ENCODE measurements at regions of chr15 and their contacts with region 1.

Region 1: DNA sequence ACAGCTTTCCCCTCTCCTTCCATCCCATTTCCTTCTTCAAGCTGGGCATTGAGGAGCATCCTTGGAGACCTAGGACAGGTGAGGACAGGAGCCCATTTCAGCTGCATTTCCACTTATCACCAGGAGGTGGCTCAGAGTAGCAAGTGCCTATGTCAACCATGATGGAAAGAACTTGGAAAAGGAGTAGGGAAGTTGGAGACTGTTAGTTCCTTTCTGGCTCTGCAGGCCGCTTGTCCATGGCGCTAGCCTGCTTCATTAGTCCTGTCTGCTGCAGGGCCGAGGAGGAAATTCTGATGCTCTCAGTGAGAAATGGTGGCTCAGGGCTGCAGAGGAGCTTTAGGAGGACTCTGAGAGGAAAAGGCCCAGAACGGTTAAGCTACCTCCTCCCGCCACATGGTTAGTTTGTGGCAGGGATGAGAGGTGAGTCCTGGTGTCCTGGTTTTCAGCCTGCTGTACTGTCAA is 7.0 kb upstream of the CD276 start:
- DNase-seq: peak; percentile 40 to 45 (median 42)
- H3K4me3 ChIP-seq: no peak overlapping the region
- H3K27ac ChIP-seq: no peak overlapping the region
- H3K4me1 ChIP-seq: peaks cover 0 to 29% (median 8%) of the 10 kb centered on the region in 4 experiments
- H3K27me3 ChIP-seq: peaks cover 0 to 6% (median 0%) of the 10 kb centered on the region in 5 experiments

Region 2: DNA sequence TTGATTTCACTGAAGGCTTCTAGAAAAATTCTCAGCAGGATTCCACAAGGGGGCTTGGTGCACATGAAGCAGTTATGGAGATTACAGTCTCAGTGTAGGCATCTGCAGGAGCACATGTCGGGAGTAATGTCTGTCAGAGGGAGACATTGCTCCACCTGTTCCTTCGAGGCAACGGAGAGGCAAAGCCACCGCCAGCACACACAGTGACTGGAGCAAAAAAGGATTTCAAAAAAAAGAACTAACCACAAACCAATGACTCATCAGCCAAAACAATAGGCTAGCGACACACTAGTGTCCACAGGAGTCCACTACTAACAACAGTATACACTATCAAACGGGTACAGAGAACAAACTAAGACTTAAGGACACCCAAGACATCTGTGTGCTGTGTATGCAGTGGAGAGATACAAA is 112.9 kb before region 1 on chr15:
- CTCF ChIA-PET with region 1: no interaction called
- POLR2A ChIA-PET with region 1: no interaction called
- DNase-seq: peak; percentile 46 to 80 (median 74)
- H3K4me3 ChIP-seq: no peak overlapping the region
- H3K27ac ChIP-seq: no peak overlapping the region
- H3K4me1 ChIP-seq: peaks cover 0 to 15% (median 7%) of the 10 kb centered on the region in 4 experiments
- H3K27me3 ChIP-seq: no peaks in the 10 kb centered on the region

Region 3: DNA sequence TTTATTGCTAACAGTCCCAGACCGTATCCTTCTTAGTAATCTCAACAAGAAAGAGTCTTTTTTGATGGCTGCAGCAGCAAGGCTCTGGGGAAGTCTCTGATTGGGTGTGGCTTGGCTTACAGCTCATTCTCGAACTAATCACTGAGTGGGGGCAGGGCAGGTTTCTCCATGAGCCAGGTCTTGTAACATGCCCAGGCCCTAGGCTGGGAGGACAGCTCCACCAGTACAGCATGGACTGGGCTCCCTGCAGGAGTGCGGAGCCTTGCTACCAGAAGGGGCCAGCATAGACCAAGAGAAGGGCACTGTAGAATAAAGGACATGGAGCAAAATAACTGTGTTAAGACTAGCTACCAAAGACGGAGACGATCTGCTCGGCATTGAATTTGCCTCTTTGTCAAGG is 14.2 kb after region 1 on chr15:
- CTCF ChIA-PET with region 1: interaction called, 235 read pairs
- POLR2A ChIA-PET with region 1: interaction called, 3 read pairs
- DNase-seq: peak in 1 of 3 donors; percentile 8
- H3K4me3 ChIP-seq: no peak overlapping the region
- H3K27ac ChIP-seq: no peak overlapping the region
- H3K4me1 ChIP-seq: peaks cover 0 to 32% (median 15%) of the 10 kb centered on the region in 4 experiments
- H3K27me3 ChIP-seq: peaks cover 0 to 48% (median 9%) of the 10 kb centered on the region in 5 experiments

Measured in common myeloid progenitor, CD34-positive (primary cell).